Caco-2 (cell line): ENCODE measurements at regions of chr7 and their contacts with region 1.

Region 1: GRCh38 chr7:29163854-29164253 is 17.5 kb upstream of the CPVL start:
- DNase-seq: peak in 1 of 2 experiments; percentile 32
- H3K4me3 ChIP-seq: no peak overlapping the region
- H3K4me3 Mint-ChIP-seq: no peak overlapping the region
- H3K27ac Mint-ChIP-seq: no peak overlapping the region
- H3K4me1 ChIP-seq: peaks cover 11% of the 10 kb centered on the region
- H3K4me1 Mint-ChIP-seq: peaks cover 20% of the 10 kb centered on the region
- H3K27me3 ChIP-seq: no peaks in the 10 kb centered on the region
- H3K27me3 Mint-ChIP-seq: no peaks in the 10 kb centered on the region
- CTCF ChIP-seq: no peak

Region 2: GRCh38 chr7:29045258-29046086 is 118.4 kb before region 1 on chr7:
- CTCF ChIA-PET with region 1: no interaction called
- POLR2A ChIA-PET with region 1: no interaction called
- intact Hi-C with region 1: no loop called
- DNase-seq: no peak
- H3K4me3 ChIP-seq: no peak overlapping the region
- H3K4me3 Mint-ChIP-seq: no peak overlapping the region
- H3K27ac Mint-ChIP-seq: no peak overlapping the region
- H3K4me1 ChIP-seq: no peaks in the 10 kb centered on the region; the same call in 1 of the 2 replicates
- H3K4me1 Mint-ChIP-seq: peaks cover 13% of the 10 kb centered on the region
- H3K27me3 ChIP-seq: no peaks in the 10 kb centered on the region
- H3K27me3 Mint-ChIP-seq: no peaks in the 10 kb centered on the region
- CTCF ChIP-seq: no peak

Region 3: DNA sequence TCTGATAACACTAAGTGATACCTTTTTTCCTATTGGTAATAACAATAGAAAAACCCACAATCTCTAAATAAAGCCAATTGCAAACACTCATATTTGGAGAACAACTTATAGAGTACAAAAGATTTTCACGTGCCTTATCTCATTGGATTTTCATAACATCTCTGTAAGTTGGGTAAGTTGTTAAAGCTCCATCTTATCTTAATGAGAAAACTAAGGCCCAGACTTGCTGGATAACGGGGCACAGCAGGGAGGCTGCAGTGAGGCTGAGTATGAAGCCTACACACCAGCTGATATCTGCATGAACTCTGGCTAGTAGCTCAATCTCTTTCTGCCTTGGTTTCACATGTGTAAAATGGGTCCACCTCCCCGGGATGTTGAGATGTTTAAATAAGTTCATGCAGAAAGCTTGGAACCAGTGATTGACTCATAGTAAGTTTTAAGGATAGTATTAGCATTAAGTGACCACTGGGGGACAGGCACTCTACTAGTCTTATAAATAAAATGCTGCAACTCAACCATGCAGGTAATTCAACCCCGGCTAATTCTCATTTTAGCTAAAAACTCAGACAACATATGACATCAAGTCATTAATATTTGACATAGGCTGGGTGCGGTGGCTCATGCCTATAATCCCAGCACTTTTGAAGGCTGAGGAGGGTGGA is 44.2 kb before region 1 on chr7:
- CTCF ChIA-PET with region 1: no interaction called
- POLR2A ChIA-PET with region 1: no interaction called
- intact Hi-C with region 1: loop called (anchors 5 kb)
- DNase-seq: no peak
- H3K4me3 ChIP-seq: no peak overlapping the region
- H3K4me3 Mint-ChIP-seq: no peak overlapping the region
- H3K27ac Mint-ChIP-seq: no peak overlapping the region
- H3K4me1 ChIP-seq: peaks cover 35% of the 10 kb centered on the region
- H3K4me1 Mint-ChIP-seq: peaks cover 44% of the 10 kb centered on the region
- H3K27me3 ChIP-seq: no peaks in the 10 kb centered on the region
- H3K27me3 Mint-ChIP-seq: no peaks in the 10 kb centered on the region
- CTCF ChIP-seq: peak in 1 of 2 experiments; percentile 18

Region 4: DNA sequence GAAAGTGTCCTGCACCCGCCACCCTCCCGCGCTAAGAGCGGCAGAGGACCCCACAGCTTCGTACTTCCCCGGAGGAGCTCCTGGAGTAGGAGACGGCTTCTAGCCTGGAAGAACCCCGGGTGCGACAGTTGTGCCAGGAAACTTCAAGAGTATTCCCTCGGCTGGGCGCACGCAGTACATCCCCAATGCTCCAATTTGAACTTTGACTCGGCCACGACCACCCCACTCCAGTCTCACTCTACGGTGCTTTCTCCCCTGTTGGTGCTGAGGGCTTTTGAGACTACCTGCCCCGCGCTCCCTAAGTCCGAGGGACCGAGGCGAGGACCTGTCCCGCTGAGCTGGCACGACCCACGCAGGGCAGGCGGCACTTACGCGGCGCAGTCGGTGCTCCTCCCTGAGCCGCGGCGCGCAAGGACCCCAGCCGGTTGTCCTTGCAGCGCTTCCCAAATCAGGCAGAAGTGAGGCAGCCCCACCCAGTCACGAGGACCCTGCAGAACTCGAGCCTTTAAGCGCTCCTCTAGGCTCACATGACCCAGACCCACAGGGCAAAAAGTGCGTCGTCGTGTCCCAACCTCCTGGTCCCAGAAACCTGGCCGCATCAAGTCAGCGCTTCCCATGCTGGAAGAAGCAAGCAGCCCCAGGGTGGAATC is 17.7 kb before region 1 on chr7 and contains the start of gene CPVL:
- CTCF ChIA-PET with region 1: interaction called, 4 read pairs
- POLR2A ChIA-PET with region 1: interaction called, 4 read pairs
- intact Hi-C with region 1: loop called (anchors 2 kb)
- DNase-seq: peak; percentile 88 to 92
- H3K4me3 ChIP-seq: peak within 1 kb of the TSS; percentile 54
- H3K4me3 Mint-ChIP-seq: peak within 1 kb of the TSS; percentile 98
- H3K27ac Mint-ChIP-seq: peak within 1 kb of the TSS; percentile 91
- H3K4me1 ChIP-seq: peaks cover 27% of the 10 kb centered on the region
- H3K4me1 Mint-ChIP-seq: peaks cover 20% of the 10 kb centered on the region
- H3K27me3 ChIP-seq: no peaks in the 10 kb centered on the region
- H3K27me3 Mint-ChIP-seq: no peaks in the 10 kb centered on the region
- CTCF ChIP-seq: no peak
- total RNA-seq, gene CPVL: 108 and 109 TPM in 2 replicates